SK-N-SH (cell line): ENCODE measurements at regions of chr17 and their contacts with region 1.

Region 1: GRCh38 chr17:55641676-55642081 is 81.0 kb downstream of the TMEM100 start:
- DNase-seq: peak; percentile 49
- H3K4me3 ChIP-seq: no peak overlapping the region
- H3K27ac ChIP-seq: no peak overlapping the region
- H3K4me1 ChIP-seq: no peaks in the 10 kb centered on the region; a peak in 1 of 4 replicates
- H3K27me3 ChIP-seq: no peaks in the 10 kb centered on the region; the same call in 1 of the 2 replicates
- CTCF ChIP-seq: peak; percentile 78
- EP300 ChIP-seq: no peak
- RAD21 ChIP-seq: peak; percentile 78

Region 2: GRCh38 chr17:55324296-55324978 is 317.2 kb before region 1 on chr17:
- CTCF ChIA-PET with region 1: no interaction called
- POLR2A ChIA-PET with region 1: no interaction called
- DNase-seq: no peak
- H3K4me3 ChIP-seq: no peak overlapping the region
- H3K27ac ChIP-seq: no peak overlapping the region
- H3K4me1 ChIP-seq: no peaks in the 10 kb centered on the region
- H3K27me3 ChIP-seq: no peaks in the 10 kb centered on the region
- CTCF ChIP-seq: no peak
- EP300 ChIP-seq: no peak
- RAD21 ChIP-seq: no peak

Region 3: DNA sequence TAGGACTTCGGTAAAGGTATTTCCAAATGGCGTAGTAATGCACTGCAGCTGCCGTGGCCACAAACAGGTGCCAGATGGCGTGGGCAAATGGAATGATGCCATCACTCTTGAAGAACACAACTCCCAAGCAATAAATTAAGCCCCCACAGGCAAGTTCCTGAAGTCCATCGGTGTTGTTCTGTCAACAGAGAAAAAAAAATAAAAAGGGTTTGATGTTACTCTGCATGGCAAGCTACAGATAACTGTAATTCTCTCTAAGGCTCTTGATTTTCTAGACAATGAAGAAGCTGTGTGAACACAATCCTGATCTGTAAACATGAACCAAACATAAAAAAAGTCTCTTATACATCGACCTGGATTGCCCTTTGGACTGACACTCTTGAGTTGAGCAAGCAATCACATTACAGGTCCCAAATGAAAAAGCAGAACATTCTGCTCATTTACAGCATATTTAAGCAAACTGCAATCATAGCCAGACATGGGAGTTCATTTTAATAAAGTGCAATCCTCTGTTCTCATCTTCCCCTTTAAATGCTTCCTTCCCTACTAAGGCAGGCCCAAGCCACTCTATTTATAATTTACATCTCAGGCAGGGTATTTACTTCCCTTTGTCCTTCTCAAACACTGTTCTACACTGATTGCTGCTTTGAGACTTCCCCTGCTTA is 247.2 kb before region 1 on chr17:
- CTCF ChIA-PET with region 1: no interaction called
- POLR2A ChIA-PET with region 1: no interaction called
- DNase-seq: no peak
- H3K4me3 ChIP-seq: no peak overlapping the region
- H3K27ac ChIP-seq: peak overlapping the region in 1 of 2 experiments; percentile 23; a peak in 1 of 4 replicates
- H3K4me1 ChIP-seq: no peaks in the 10 kb centered on the region; a peak in 1 of 4 replicates
- H3K27me3 ChIP-seq: no peaks in the 10 kb centered on the region
- CTCF ChIP-seq: no peak
- EP300 ChIP-seq: no peak
- RAD21 ChIP-seq: no peak

Region 4: DNA sequence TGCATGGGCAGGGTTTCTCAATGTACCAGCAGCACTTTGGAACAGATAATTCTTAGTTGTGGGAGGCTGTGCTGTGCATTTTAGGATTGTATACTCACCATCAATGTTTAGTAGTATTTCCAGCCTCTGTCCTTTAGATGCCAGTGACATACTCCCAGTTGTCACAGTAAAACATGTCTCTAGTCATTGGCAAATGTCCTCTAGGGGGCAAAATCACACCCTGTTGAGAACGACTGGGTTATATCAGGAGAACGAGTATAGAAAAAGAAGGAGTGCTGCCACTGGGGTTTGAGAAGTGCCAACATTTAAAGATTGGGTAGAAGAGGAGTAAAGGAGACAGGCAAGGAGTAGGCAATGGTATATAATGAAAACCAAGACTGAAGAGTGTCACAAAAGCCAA is 92.5 kb before region 1 on chr17:
- CTCF ChIA-PET with region 1: interaction called, 11 read pairs
- POLR2A ChIA-PET with region 1: no interaction called
- DNase-seq: no peak
- H3K4me3 ChIP-seq: no peak overlapping the region
- H3K27ac ChIP-seq: no peak overlapping the region
- H3K4me1 ChIP-seq: no peaks in the 10 kb centered on the region
- H3K27me3 ChIP-seq: no peaks in the 10 kb centered on the region; the same call in 1 of the 2 replicates
- CTCF ChIP-seq: peak; percentile 41
- EP300 ChIP-seq: no peak
- RAD21 ChIP-seq: peak; percentile 69

Region 5: DNA sequence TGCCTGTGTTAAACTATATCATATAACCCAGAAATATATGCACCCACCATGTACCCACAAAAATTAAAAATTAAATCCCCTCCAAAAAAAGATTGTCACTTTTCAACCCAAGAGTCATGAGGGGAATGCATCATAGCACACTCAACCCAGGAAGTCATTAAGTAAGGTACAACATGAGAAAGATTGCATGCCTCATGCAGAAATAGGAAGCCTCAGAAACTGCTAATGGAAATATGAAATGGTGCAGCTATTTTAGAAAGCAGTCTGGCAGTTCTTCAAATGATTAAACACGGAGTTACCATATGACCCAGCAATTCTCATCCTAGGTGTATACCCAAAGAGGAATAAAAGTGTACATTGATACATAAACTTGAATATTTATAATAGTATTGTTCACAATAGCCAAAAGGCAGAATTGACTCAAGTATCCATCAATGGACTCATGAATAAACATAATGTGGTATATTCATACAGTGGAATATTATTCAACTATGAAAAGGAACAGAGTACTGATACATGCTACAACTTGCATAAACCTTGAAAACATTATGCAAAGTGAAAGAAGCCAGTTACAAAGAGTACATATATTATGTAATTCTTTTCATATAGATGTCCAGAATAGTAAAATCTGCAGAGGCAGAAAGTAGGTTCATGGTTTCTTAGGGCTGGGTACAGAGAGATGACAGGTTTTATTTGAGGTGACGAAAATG is 10.6 kb after region 1 on chr17:
- CTCF ChIA-PET with region 1: interaction called, 20 read pairs
- POLR2A ChIA-PET with region 1: no interaction called
- DNase-seq: no peak
- H3K4me3 ChIP-seq: no peak overlapping the region
- H3K27ac ChIP-seq: no peak overlapping the region
- H3K4me1 ChIP-seq: peaks cover 5 to 17% of the 10 kb centered on the region in 2 experiments; a peak in 3 of 4 replicates
- H3K27me3 ChIP-seq: no peaks in the 10 kb centered on the region
- CTCF ChIP-seq: no peak
- EP300 ChIP-seq: no peak
- RAD21 ChIP-seq: no peak

Region 6: GRCh38 chr17:55690105-55690508 is 48.4 kb after region 1 on chr17:
- CTCF ChIA-PET with region 1: interaction called, 19 read pairs
- POLR2A ChIA-PET with region 1: no interaction called
- DNase-seq: peak; percentile 58
- H3K4me3 ChIP-seq: no peak overlapping the region
- H3K27ac ChIP-seq: peak overlapping the region in 1 of 2 experiments; percentile 99; a peak in 2 of 4 replicates
- H3K4me1 ChIP-seq: peaks cover 0 to 54% of the 10 kb centered on the region in 2 experiments; a peak in 3 of 4 replicates
- H3K27me3 ChIP-seq: no peaks in the 10 kb centered on the region
- CTCF ChIP-seq: no peak
- EP300 ChIP-seq: peak; percentile 22 to 99; a peak in 2 of 4 replicates
- RAD21 ChIP-seq: peak; percentile 38

Region 7: GRCh38 chr17:55735731-55736405 is 94.2 kb after region 1 on chr17:
- CTCF ChIA-PET with region 1: interaction called, 10 read pairs
- POLR2A ChIA-PET with region 1: no interaction called
- DNase-seq: peak; percentile 52
- H3K4me3 ChIP-seq: no peak overlapping the region; a peak in 1 of 4 replicates
- H3K27ac ChIP-seq: no peak overlapping the region
- H3K4me1 ChIP-seq: peaks cover 14 to 39% of the 10 kb centered on the region in 2 experiments
- H3K27me3 ChIP-seq: no peaks in the 10 kb centered on the region
- CTCF ChIP-seq: peak; percentile 89
- EP300 ChIP-seq: no peak
- RAD21 ChIP-seq: peak; percentile 77

Region 8: GRCh38 chr17:55986817-55987216 is 345.1 kb after region 1 on chr17:
- CTCF ChIA-PET with region 1: no interaction called
- POLR2A ChIA-PET with region 1: no interaction called
- DNase-seq: no peak
- H3K4me3 ChIP-seq: no peak overlapping the region
- H3K27ac ChIP-seq: no peak overlapping the region
- H3K4me1 ChIP-seq: no peaks in the 10 kb centered on the region
- H3K27me3 ChIP-seq: no peaks in the 10 kb centered on the region
- CTCF ChIP-seq: no peak
- EP300 ChIP-seq: no peak
- RAD21 ChIP-seq: no peak